ENCODE measurements at regions of chr4 and their contacts with region 1.

Region 1: DNA sequence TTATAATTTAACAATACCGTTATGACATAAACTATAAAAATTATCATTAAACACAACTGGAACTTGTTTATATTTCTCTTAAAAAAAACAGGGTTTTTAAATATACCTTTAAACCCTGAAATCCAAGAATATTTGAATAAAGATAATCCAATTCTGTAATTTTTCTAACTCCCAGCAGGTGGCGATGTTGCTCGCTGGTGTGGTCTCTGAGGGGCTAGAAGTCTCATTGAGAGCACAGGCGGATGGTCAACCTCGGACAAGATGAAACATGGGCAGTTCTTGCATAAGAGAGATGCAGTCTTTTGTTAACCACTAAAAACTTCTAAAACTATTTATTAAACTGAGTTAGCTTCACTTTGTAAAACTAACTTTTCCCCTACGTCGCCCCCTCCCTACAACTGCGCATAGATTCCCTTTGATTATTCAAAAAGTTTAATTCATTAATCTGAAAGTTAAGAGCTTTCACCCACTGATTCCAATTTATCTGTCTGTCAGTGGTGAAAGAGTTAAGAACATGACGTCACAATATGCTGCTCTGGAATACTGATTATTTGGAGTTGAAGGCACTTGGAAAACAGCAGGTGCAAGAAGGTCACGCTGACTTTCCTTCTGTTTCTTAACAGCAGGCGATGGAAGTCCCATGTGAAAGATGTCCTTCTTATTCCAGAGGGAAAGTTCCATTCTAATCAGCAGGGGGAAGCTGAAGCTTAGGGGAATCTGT is 29.5 kb downstream of the DMP1 start:
- DNase-seq: no peak
- H3K4me3 ChIP-seq: no peak overlapping the region
- H3K27ac ChIP-seq: no peak overlapping the region
- H3K4me1 ChIP-seq: peaks cover 0 to 4% (median 0%) of the 10 kb centered on the region in 3 donors
- H3K27me3 ChIP-seq: no peaks in the 10 kb centered on the region
- CTCF ChIP-seq: peak; percentile 44 to 83 (median 66)
- POLR2A ChIP-seq: no peak

Region 2: GRCh38 chr4:87118826-87119225 is 560.8 kb before region 1 on chr4:
- intact Hi-C with region 1: no loop called
- DNase-seq: no peak
- H3K4me3 ChIP-seq: no peak overlapping the region
- H3K27ac ChIP-seq: peak overlapping the region in 3 of 4 donors; percentile 80 to 86 (median 85)
- H3K4me1 ChIP-seq: peaks cover 22 to 83% (median 27%) of the 10 kb centered on the region in 3 donors
- H3K27me3 ChIP-seq: no peaks in the 10 kb centered on the region
- CTCF ChIP-seq: no peak
- POLR2A ChIP-seq: no peak

Region 3: DNA sequence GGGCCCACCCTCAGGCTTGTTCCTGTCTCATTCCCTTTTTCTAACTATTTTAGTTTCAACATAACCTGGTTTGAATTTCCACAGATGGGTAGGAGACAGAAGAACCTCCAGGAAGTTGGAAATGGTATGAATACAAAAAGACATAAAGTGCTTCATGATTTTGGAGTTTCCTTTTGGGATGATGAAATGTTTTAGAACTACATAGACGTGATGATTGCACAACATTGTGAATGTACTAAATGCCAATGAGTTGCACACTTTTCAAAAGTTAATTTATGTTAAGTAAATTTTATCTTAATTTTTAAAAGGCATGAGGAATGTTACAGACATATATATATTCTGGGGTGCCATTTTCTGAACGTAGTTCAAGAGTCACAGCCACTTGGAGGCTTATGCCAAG is 78.7 kb after region 1 on chr4:
- intact Hi-C with region 1: no loop called
- DNase-seq: no peak
- H3K4me3 ChIP-seq: no peak overlapping the region
- H3K27ac ChIP-seq: no peak overlapping the region
- H3K4me1 ChIP-seq: no peaks in the 10 kb centered on the region
- H3K27me3 ChIP-seq: no peaks in the 10 kb centered on the region
- CTCF ChIP-seq: no peak
- POLR2A ChIP-seq: no peak

Region 4: GRCh38 chr4:87838890-87839591 is 159.4 kb after region 1 on chr4:
- intact Hi-C with region 1: loop called (anchors 5 kb)
- DNase-seq: no peak
- H3K4me3 ChIP-seq: no peak overlapping the region
- H3K27ac ChIP-seq: no peak overlapping the region
- H3K4me1 ChIP-seq: peaks cover 0 to 6% (median 0%) of the 10 kb centered on the region in 3 donors
- H3K27me3 ChIP-seq: no peaks in the 10 kb centered on the region
- CTCF ChIP-seq: peak in 5 of 6 experiments; percentile 54 to 78 (median 68)
- POLR2A ChIP-seq: no peak

Region 5: DNA sequence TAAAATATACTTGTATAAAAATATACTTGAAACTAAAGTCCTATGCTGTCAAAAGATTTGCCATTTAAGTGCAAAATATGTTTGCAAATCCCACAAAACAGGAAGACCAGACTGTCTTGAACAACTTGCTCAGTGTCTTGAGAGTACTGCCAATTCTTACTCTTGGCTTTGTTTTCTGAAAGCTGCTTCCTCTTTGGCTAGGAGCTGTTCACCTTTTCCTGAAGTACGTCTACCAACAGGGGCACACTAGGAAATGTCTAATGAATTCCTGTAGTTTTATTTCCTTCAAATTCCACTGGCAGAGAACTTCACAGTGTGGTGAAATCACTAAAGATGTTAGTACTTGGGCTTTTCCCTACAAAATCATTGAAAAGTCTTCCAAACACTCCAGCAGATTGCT is 525.3 kb after region 1 on chr4:
- intact Hi-C with region 1: loop called (anchors 10 kb)
- DNase-seq: no peak
- H3K4me3 ChIP-seq: no peak overlapping the region
- H3K27ac ChIP-seq: peak overlapping the region in 2 of 4 donors; percentile 19 to 47
- H3K4me1 ChIP-seq: peaks cover 0 to 22% (median 0%) of the 10 kb centered on the region in 3 donors
- H3K27me3 ChIP-seq: no peaks in the 10 kb centered on the region
- CTCF ChIP-seq: no peak
- POLR2A ChIP-seq: no peak

Region 6: DNA sequence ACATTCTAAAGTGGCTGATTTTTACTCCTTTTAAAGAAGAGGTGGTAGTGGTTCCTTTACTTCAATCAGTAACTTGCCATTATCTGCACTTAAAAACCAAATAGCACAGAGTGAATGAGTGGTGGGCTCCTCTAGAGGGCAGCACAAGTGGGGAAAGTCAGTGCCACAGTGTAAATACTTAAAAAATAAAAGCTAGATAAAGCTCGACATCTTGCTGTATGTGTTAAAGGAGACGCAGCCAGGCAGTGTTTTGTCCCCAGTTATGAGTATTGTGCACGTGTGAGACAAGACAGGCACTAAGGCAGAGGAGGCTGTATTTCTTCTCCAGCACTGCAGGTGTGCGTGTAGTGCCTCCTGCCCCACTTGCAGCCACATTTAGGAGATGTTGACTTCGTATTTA is 993.4 kb after region 1 on chr4:
- intact Hi-C with region 1: no loop called
- DNase-seq: no peak
- H3K4me3 ChIP-seq: no peak overlapping the region
- H3K27ac ChIP-seq: no peak overlapping the region
- H3K4me1 ChIP-seq: no peaks in the 10 kb centered on the region
- H3K27me3 ChIP-seq: no peaks in the 10 kb centered on the region
- CTCF ChIP-seq: peak in 4 of 6 experiments; percentile 3 to 37 (median 22)
- POLR2A ChIP-seq: no peak